WTC11 (cell line): ENCODE measurements at regions of chr2 and their contacts with region 1.

Region 1: GRCh38 chr2:105179469-105180372 is 61.8 kb upstream of the GPR45 start:
- DNase-seq: peak; percentile 16
- ATAC-seq: peak; percentile 40
- H3K4me3 Mint-ChIP-seq: no peak overlapping the region
- H3K27ac Mint-ChIP-seq: no peak overlapping the region
- H3K4me1 Mint-ChIP-seq: peaks cover 33% of the 10 kb centered on the region
- H3K27me3 Mint-ChIP-seq: peaks cover 42% of the 10 kb centered on the region
- CTCF ChIP-seq: no peak

Region 2: GRCh38 chr2:105166688-105167087 is 13.0 kb before region 1 on chr2:
- CTCF ChIA-PET with region 1: interaction called, 10 read pairs
- POLR2A ChIA-PET with region 1: no interaction called
- DNase-seq: no peak
- ATAC-seq: peak; percentile 94
- H3K4me3 Mint-ChIP-seq: no peak overlapping the region
- H3K27ac Mint-ChIP-seq: peak overlapping the region; percentile 72
- H3K4me1 Mint-ChIP-seq: peaks cover 27% of the 10 kb centered on the region
- H3K27me3 Mint-ChIP-seq: peaks cover 8% of the 10 kb centered on the region
- CTCF ChIP-seq: no peak